Activated B cell treated with CpG ODN at 0.5 μM for 24 hours (primary cell): ENCODE measurements at regions of chr12 and their contacts with region 1.

Region 1: DNA sequence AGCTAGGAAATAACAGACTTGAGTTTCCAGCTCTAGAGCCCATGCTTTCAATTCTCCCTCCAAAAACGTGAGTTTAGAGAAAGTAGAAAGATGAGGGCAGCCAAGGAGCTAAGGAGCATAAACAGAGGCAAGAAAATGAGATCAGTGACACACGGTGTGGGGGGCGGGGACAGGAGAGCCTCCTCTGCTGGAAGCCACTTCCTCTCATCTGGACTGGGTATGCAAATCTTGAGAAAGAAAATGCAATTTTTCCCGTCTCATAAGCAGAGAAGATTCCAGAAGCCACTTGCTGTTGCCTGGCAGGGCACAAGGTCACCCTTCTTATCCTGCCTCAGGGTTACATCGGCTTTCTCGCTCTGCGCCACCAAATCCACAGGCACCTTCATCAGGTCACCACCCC is 6.0 kb downstream of the OR10P1 start:
- DNase-seq: no peak
- ATAC-seq: no peak
- H3K4me3 Mint-ChIP-seq: peak overlapping the region; percentile 55
- H3K27ac Mint-ChIP-seq: peak overlapping the region; percentile 68
- H3K4me1 Mint-ChIP-seq: peaks cover 40% of the 10 kb centered on the region
- H3K27me3 Mint-ChIP-seq: peaks cover 2% of the 10 kb centered on the region
- CTCF ChIP-seq: no peak

Region 2: DNA sequence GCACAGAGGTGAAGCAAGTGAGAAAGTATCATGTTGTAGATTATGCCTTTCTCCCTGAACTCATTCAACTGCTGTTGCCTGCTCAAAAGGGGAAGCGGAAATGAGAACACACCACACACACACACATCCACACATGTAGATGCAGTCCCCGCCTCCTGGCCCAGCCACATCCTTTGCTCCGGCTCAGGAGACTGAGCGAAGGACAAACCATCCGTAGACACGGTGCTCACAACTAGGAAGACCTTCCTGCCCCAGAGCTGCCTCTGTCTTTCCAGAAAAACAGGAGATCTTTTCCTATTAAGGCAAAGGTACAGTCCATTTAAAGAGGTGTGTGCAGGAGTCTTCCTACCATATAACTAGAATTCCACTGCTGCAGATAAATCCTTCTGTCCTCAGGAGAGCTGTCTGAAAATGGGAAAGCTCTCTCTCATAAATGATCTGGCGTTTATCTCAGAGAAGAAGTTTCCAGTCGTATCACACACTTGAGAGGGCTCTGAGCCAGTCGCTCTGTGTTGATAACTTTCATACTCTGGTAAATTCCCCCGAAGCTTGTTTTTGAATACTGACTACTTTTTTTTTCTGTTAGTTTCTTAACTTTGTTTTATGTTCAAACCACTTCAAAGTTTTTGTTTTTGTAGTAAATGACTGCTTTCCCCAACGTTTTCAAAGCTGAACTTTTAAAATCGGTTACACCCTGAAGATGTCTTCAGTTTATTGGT is 657.9 kb before region 1 on chr12 and contains the start of gene TESPA1:
- CTCF ChIA-PET with region 1: no interaction called
- POLR2A ChIA-PET with region 1: interaction called, 3 read pairs
- intact Hi-C with region 1: loop called (anchors 1 kb)
- DNase-seq: peak; percentile 62
- ATAC-seq: peak; percentile 97
- H3K4me3 Mint-ChIP-seq: peak within 1 kb of the TSS; percentile 89
- H3K27ac Mint-ChIP-seq: peak within 1 kb of the TSS; percentile 97
- H3K4me1 Mint-ChIP-seq: peaks cover 80% of the 10 kb centered on the region
- H3K27me3 Mint-ChIP-seq: no peaks in the 10 kb centered on the region
- CTCF ChIP-seq: no peak
- total RNA-seq, gene TESPA1: 31.5 and 35.5 TPM in 2 replicates

Region 3: GRCh38 chr12:55619354-55620138 is 23.1 kb before region 1 on chr12:
- CTCF ChIA-PET with region 1: interaction called, 3 read pairs
- POLR2A ChIA-PET with region 1: no interaction called
- intact Hi-C with region 1: loop called (anchors 1 kb)
- DNase-seq: no peak
- ATAC-seq: peak; percentile 87
- H3K4me3 Mint-ChIP-seq: no peak overlapping the region
- H3K27ac Mint-ChIP-seq: no peak overlapping the region
- H3K4me1 Mint-ChIP-seq: no peaks in the 10 kb centered on the region
- H3K27me3 Mint-ChIP-seq: peaks cover 13% of the 10 kb centered on the region
- CTCF ChIP-seq: no peak

Region 4: DNA sequence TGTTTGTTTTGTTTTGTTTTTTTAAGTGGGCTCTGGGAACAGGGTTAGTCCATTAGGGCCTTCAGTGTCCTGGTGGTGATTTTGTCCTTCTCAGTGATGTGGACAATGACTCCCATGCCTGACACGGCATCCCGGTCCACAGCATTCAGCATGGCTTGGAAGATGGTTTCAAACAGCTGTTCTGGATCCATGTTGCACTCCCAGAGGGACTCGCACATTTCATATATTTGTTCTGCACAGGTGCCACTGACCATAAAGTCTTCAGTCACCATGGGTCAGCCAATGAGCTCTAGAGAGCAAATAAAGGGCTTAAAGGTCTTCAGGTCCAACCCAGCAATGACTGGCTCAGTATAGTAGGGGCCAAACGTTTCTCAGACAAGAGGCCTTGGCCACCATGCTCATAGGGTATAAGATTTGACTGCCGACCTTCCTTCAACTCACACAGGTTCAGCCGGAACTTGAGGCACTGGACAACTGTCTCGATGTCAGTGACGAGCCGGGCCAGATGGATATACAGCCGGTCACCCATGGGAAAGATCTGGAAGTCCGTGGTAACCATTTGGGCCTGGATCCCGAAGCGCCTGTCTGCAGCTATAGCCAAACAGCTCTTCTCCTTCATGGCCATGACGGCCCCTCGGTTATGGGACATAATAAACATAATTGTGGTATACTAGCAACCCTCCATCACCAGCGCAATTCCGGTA is 12.0 kb after region 1 on chr12:
- CTCF ChIA-PET with region 1: interaction called, 99 read pairs
- POLR2A ChIA-PET with region 1: interaction called, 15 read pairs
- intact Hi-C with region 1: loop called (anchors 1 kb)
- DNase-seq: no peak
- ATAC-seq: no peak
- H3K4me3 Mint-ChIP-seq: no peak overlapping the region
- H3K27ac Mint-ChIP-seq: no peak overlapping the region
- H3K4me1 Mint-ChIP-seq: peaks cover 26% of the 10 kb centered on the region
- H3K27me3 Mint-ChIP-seq: no peaks in the 10 kb centered on the region
- CTCF ChIP-seq: no peak

Region 5: GRCh38 chr12:55715833-55716581 is 73.3 kb after region 1 on chr12 and contains the start of gene BLOC1S1:
- CTCF ChIA-PET with region 1: interaction called, 6 read pairs
- POLR2A ChIA-PET with region 1: interaction called, 8 read pairs
- intact Hi-C with region 1: loop called (anchors 2 kb)
- DNase-seq: peak; percentile 92
- ATAC-seq: peak; percentile 94
- H3K4me3 Mint-ChIP-seq: peak within 1 kb of the TSS; percentile 92
- H3K27ac Mint-ChIP-seq: peak within 1 kb of the TSS; percentile 91
- H3K4me1 Mint-ChIP-seq: peaks cover 34% of the 10 kb centered on the region
- H3K27me3 Mint-ChIP-seq: peaks cover 2% of the 10 kb centered on the region
- CTCF ChIP-seq: no peak
- total RNA-seq, gene BLOC1S1: 91.0 and 104 TPM in 2 replicates

Region 6: DNA sequence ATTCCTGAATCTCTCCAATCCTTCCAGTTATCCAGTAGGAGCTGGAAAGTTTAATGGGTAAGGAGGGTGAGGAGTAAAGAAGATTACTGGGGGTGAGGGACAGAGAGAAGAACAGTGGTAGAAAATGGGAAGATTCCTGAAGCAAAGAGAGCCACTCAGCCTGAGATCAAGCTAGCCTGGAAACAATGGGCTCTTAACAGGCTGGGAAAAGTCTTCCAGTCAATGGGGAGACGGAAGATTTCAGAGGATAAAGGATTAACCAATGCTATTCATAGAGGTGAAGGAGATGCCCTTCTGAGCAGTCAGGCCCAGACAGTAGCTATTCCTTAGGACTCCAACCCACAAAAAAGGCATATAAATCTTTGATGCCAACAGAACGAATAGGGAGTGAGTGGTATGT is 115.0 kb after region 1 on chr12:
- CTCF ChIA-PET with region 1: no interaction called
- POLR2A ChIA-PET with region 1: interaction called, 14 read pairs
- intact Hi-C with region 1: no loop called
- DNase-seq: no peak
- ATAC-seq: no peak
- H3K4me3 Mint-ChIP-seq: no peak overlapping the region
- H3K27ac Mint-ChIP-seq: peak overlapping the region; percentile 7
- H3K4me1 Mint-ChIP-seq: no peaks in the 10 kb centered on the region
- H3K27me3 Mint-ChIP-seq: no peaks in the 10 kb centered on the region
- CTCF ChIP-seq: no peak